CD14-positive monocyte (primary cell): ENCODE measurements at regions of chr7 and their contacts with region 1.

Region 1: GRCh38 chr7:77759294-77759889 is 38.8 kb downstream of the TMEM60 start:
- DNase-seq: peak; percentile 60 to 74 (median 67)
- H3K4me3 ChIP-seq: no peak overlapping the region
- H3K4me3 Mint-ChIP-seq: no peak overlapping the region
- H3K27ac ChIP-seq: peak overlapping the region in 1 of 2 donors; percentile 48
- H3K27ac Mint-ChIP-seq: peak overlapping the region in 1 of 7 donors; percentile 37
- H3K4me1 ChIP-seq: no peaks in the 10 kb centered on the region
- H3K4me1 Mint-ChIP-seq: peaks cover 12% of the 10 kb centered on the region
- H3K27me3 ChIP-seq: no peaks in the 10 kb centered on the region
- H3K27me3 Mint-ChIP-seq: no peaks in the 10 kb centered on the region
- CTCF ChIP-seq: peak; percentile 84

Region 2: DNA sequence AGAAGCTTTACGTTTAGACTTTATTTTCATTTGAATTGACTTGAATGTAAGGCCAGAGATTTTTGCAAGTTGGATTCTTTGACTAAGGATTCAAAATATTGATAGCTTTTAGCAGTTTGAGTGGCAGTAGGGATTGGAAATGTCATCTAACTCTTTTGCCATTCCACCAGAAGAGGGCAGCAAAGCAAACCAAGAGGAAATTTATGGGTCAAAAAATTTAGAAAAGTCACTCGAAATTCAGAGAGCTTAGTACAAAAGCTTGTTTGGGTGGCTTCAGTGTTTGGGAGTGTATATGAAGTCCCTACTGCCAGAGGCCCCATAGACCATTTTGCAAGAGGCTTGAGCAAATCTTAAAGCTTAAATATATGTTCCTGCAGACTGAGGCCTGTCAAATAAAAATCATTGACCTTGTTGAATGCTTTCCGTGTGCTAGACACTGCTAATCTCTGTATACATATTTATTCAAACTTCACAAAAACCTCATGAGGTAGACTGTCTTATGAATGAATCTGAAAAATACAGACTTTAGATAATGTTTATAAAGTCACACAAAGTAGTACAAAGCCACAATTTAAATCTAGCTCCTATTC is 107.7 kb before region 1 on chr7:
- intact Hi-C with region 1: loop called (anchors 5 kb)
- DNase-seq: peak; percentile 14 to 18 (median 15)
- H3K4me3 ChIP-seq: no peak overlapping the region
- H3K4me3 Mint-ChIP-seq: no peak overlapping the region
- H3K27ac ChIP-seq: no peak overlapping the region
- H3K27ac Mint-ChIP-seq: no peak overlapping the region
- H3K4me1 ChIP-seq: no peaks in the 10 kb centered on the region
- H3K4me1 Mint-ChIP-seq: peaks cover 3% of the 10 kb centered on the region
- H3K27me3 ChIP-seq: no peaks in the 10 kb centered on the region
- H3K27me3 Mint-ChIP-seq: peaks cover 0 to 2% (median 0%) of the 10 kb centered on the region in 3 donors
- CTCF ChIP-seq: peak; percentile 78

Region 3: GRCh38 chr7:77657427-77658224 is 101.8 kb before region 1 on chr7:
- intact Hi-C with region 1: loop called (anchors 5 kb)
- DNase-seq: peak; percentile 10 to 40 (median 37)
- H3K4me3 ChIP-seq: no peak overlapping the region
- H3K4me3 Mint-ChIP-seq: no peak overlapping the region
- H3K27ac ChIP-seq: peak overlapping the region in 1 of 2 donors; percentile 20
- H3K27ac Mint-ChIP-seq: peak overlapping the region in 3 of 7 donors; percentile 56 to 81 (median 69)
- H3K4me1 ChIP-seq: peaks cover 10 to 33% of the 10 kb centered on the region in 2 donors
- H3K4me1 Mint-ChIP-seq: peaks cover 23% of the 10 kb centered on the region
- H3K27me3 ChIP-seq: no peaks in the 10 kb centered on the region
- H3K27me3 Mint-ChIP-seq: peaks cover 0 to under 1% (median 0%) of the 10 kb centered on the region in 3 donors
- CTCF ChIP-seq: peak; percentile 42

Region 4: GRCh38 chr7:78015574-78016260 is 256.3 kb after region 1 on chr7:
- intact Hi-C with region 1: no loop called
- DNase-seq: no peak
- H3K4me3 ChIP-seq: no peak overlapping the region
- H3K4me3 Mint-ChIP-seq: no peak overlapping the region
- H3K27ac ChIP-seq: no peak overlapping the region
- H3K27ac Mint-ChIP-seq: no peak overlapping the region
- H3K4me1 ChIP-seq: peaks cover 11 to 16% of the 10 kb centered on the region in 2 donors
- H3K4me1 Mint-ChIP-seq: peaks cover 17% of the 10 kb centered on the region
- H3K27me3 ChIP-seq: peaks cover 23 to 25% of the 10 kb centered on the region in 2 donors
- H3K27me3 Mint-ChIP-seq: peaks cover 24 to 27% (median 26%) of the 10 kb centered on the region in 3 donors
- CTCF ChIP-seq: no peak